A549 (cell line): ENCODE measurements at regions of chr11 and their contacts with region 1.

Region 1: DNA sequence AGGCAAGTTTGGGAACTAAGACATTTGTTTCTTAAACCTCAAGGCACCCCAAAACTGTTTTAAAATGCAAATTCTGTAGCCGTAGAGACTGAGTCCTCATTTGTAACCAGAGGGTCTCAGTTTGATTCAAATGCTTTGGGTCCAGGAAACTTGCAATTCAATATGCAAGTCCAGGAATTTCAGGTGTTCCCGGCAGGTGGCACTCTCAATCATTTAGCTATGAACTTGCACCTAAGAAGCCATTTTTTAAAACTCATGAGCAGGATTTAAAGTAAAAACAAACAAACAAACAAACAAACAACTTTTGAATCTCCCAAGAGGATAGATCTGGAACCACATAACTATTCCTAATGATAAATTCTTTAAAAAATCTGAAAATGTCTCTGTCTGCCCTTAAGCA is 8.7 kb upstream of the ABTB2 start:
- DNase-seq: peak in 1 of 2 experiments; percentile 79
- ATAC-seq: 0 out of 6 replicates have a peak, but pooled peaks of 1 of the 2 experiments have one; percentile 31
- H3K4me3 ChIP-seq: no peak overlapping the region
- H3K27ac ChIP-seq: peak overlapping the region in 1 of 2 experiments; percentile 49; a peak in 1 of 6 replicates
- H3K4me1 ChIP-seq: peaks cover 9% of the 10 kb centered on the region; the same call in 2 of the 3 replicates
- CTCF ChIP-seq: peak; percentile 72
- EP300 ChIP-seq: no peak
- POLR2A ChIP-seq: no peak
- RAD21 ChIP-seq: peak; percentile 78 to 79

Region 2: GRCh38 chr11:33996498-33997454 is 369.7 kb before region 1 on chr11:
- CTCF ChIA-PET with region 1: interaction called, 10 read pairs
- POLR2A ChIA-PET with region 1: no interaction called
- DNase-seq: peak; percentile 64 to 79
- ATAC-seq: peak; percentile 99 to 100
- H3K4me3 ChIP-seq: peak overlapping the region; percentile 23; the same call in 2 of the 3 replicates
- H3K27ac ChIP-seq: no peak overlapping the region
- H3K4me1 ChIP-seq: peaks cover 14% of the 10 kb centered on the region
- CTCF ChIP-seq: peak; percentile 87
- EP300 ChIP-seq: no peak
- POLR2A ChIP-seq: no peak
- RAD21 ChIP-seq: peak; percentile 82

Region 3: GRCh38 chr11:34438529-34439507 is 72.3 kb after region 1 on chr11 and contains the start of gene CAT:
- CTCF ChIA-PET with region 1: interaction called, 12 read pairs
- POLR2A ChIA-PET with region 1: no interaction called
- DNase-seq: peak; percentile 94 to 97
- ATAC-seq: peak; percentile 99 to 100
- H3K4me3 ChIP-seq: peak within 1 kb of the TSS; percentile 67
- H3K27ac ChIP-seq: peak within 1 kb of the TSS; percentile 86 to 92
- H3K4me1 ChIP-seq: peaks cover 12% of the 10 kb centered on the region; the same call in 2 of the 3 replicates
- CTCF ChIP-seq: no peak
- EP300 ChIP-seq: no peak
- POLR2A ChIP-seq: peak; percentile 83
- RAD21 ChIP-seq: no peak; a peak in 1 of 5 replicates
- polyA plus RNA-seq, gene CAT: 74.2 and 75.1 TPM in 2 replicates

Region 4: DNA sequence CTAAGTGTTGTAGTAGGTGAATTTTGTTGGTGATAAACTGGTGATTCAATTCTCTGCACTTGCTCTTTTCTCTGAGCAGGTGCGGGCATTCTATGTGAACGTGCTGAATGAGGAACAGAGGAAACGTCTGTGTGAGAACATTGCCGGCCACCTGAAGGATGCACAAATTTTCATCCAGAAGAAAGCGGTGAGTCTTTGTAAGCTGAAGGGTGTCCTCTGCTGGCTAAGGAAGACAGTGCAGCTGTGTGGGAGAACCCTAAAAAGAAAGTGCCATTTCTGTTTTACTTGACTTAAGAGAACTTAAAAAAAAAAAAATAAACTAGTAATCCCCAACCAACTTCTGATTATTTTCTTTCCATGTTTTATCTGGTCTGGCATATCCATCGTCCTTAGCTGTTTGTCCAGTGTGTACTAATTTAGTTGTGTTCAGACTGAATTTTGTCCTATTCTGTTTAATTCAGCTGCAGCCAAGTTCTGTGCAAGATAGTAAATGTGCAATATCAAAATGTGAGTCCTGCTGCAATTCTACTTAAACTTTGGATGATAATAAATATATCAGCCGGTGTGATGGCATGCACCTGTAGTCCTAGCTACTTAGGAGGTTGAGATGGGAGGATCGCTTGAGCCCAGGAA is 101.8 kb after region 1 on chr11:
- CTCF ChIA-PET with region 1: interaction called, 11 read pairs
- POLR2A ChIA-PET with region 1: no interaction called
- DNase-seq: peak in 1 of 2 experiments; percentile 42
- ATAC-seq: no peak
- H3K4me3 ChIP-seq: no peak overlapping the region
- H3K27ac ChIP-seq: no peak overlapping the region
- H3K4me1 ChIP-seq: no peaks in the 10 kb centered on the region
- CTCF ChIP-seq: peak; percentile 44
- EP300 ChIP-seq: no peak
- POLR2A ChIP-seq: no peak
- RAD21 ChIP-seq: peak; percentile 45 to 64; a peak in 4 of 5 replicates

Region 5: GRCh38 chr11:34492806-34493414 is 126.4 kb after region 1 on chr11:
- CTCF ChIA-PET with region 1: interaction called, 257 read pairs
- POLR2A ChIA-PET with region 1: no interaction called
- DNase-seq: peak; percentile 66 to 75
- ATAC-seq: peak; percentile 51 to 81; a peak in 3 of 6 replicates
- H3K4me3 ChIP-seq: no peak overlapping the region
- H3K27ac ChIP-seq: peak overlapping the region in 1 of 2 experiments; percentile 47; a peak in 3 of 6 replicates
- H3K4me1 ChIP-seq: no peaks in the 10 kb centered on the region
- CTCF ChIP-seq: peak; percentile 90
- EP300 ChIP-seq: no peak
- POLR2A ChIP-seq: no peak
- RAD21 ChIP-seq: peak; percentile 90